IMR-90 (cell line): ENCODE measurements at regions of chr2 and their contacts with region 1.

Region 1: DNA sequence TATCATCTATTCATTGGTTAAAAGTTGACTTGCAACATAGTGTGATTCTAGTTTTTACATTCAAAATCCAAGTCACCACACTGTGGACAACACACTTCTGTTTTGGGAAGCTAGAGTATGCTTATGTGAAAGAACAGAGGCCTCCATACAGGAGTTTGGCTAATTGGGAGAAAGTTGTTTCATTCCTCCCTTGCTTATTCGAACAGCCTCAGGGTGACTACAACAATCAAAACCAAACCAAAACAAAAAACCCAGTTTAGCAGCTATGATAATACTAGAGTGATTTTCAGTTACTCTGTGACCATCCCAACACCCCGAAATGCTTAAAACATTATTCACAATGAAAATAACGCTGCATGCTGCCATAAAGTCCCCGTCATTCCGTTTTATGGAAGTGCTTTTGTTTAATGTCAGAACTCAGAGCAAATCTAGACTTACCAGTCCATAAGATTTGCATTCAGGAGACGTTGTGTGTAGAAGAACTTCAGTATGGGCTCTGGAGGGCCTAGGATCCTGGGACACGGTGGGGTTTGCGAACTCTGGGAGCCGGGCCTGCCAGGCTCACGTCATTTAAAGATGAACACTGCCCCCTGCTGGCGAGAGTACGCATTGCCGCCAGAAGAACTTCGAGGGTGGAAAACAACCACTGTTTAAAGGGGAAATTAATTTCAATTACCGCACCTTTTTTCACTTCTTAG is 111.4 kb downstream of the FTCDNL1 start:
- DNase-seq: peak; percentile 52
- ATAC-seq: peak; percentile 75
- H3K4me3 ChIP-seq: no peak overlapping the region
- H3K27ac ChIP-seq: no peak overlapping the region
- H3K4me1 ChIP-seq: peaks cover 2% of the 10 kb centered on the region; the same call in 1 of the 2 replicates
- H3K27me3 ChIP-seq: no peaks in the 10 kb centered on the region; the same call in 1 of the 2 replicates
- CTCF ChIP-seq: peak; percentile 82
- POLR2A ChIP-seq: no peak
- RAD21 ChIP-seq: peak; percentile 64

Region 2: DNA sequence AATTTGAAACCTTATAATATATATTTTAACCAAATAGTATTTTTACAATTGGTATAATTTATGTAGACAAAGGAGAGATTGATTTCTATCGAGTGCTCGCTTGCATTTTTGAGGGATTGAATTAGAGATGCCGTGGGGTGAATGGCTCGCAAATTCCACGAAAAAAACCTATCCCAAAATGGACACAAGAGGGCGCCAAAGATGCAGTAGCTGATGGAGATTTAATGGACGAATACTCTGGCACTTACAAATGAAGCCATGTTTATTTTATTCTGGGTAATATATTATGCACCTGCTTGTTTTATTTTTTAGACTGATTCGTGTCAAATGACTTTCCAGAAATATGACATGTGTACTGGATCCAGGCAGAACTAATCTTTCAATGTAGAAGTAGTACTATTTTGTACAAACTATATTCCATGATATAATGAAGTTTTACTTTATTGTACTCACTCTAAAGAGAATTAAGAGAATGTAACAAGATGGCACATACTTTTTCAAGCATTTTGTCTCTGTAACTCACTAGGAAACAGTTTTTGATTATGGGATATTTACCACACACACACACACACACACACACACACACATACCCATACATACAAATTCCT is 1429.8 kb before region 1 on chr2:
- CTCF ChIA-PET with region 1: interaction called, 3 read pairs
- POLR2A ChIA-PET with region 1: no interaction called
- dilution Hi-C with region 1: no loop called
- in situ Hi-C with region 1: loop called (anchors 25 kb)
- intact Hi-C with region 1: loop called (anchors 2 kb)
- DNase-seq: peak; percentile 38
- ATAC-seq: peak; percentile 56
- H3K4me3 ChIP-seq: no peak overlapping the region
- H3K27ac ChIP-seq: no peak overlapping the region
- H3K4me1 ChIP-seq: no peaks in the 10 kb centered on the region
- H3K27me3 ChIP-seq: no peaks in the 10 kb centered on the region; the same call in 1 of the 2 replicates
- CTCF ChIP-seq: peak; percentile 81
- POLR2A ChIP-seq: no peak
- RAD21 ChIP-seq: peak; percentile 54

Region 3: DNA sequence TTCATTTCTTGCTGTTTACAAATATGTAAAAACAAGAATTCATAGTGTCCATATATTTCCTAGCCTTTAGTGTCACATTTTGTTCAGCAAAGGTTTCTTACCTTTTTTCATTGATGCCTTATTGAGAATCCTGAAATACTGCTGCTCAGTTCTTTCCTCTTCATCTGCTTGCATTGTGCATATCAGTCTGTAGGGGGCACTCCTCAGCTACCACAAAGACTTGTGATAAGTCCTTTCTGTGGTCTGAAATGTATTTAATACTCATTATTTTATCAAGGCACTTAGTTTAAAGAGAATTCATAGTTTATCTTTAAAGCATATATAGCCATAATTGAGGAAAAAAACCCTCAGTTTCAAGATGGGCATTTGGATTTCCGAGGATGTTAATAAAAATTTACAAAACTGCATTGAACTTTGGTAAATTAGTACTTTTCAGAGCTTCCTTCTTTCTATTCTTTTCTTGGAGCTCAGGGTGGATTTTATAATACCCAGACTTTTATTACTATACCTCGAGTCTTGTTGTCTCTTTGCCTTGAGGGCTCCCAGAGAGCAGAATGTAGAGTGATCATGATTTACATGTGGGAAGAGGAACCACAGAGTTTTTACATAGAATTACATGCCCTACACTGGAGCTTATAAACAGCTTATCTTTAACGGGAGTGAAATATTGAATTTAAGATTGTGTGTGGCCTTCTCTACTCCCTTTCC is 1365.0 kb before region 1 on chr2:
- CTCF ChIA-PET with region 1: no interaction called
- POLR2A ChIA-PET with region 1: no interaction called
- dilution Hi-C with region 1: no loop called
- in situ Hi-C with region 1: no loop called
- intact Hi-C with region 1: loop called (anchors 2 kb)
- DNase-seq: peak; percentile 70
- ATAC-seq: peak; percentile 79
- H3K4me3 ChIP-seq: no peak overlapping the region
- H3K27ac ChIP-seq: no peak overlapping the region
- H3K4me1 ChIP-seq: no peaks in the 10 kb centered on the region
- H3K27me3 ChIP-seq: no peaks in the 10 kb centered on the region
- CTCF ChIP-seq: peak; percentile 74
- POLR2A ChIP-seq: no peak
- RAD21 ChIP-seq: peak; percentile 75

Region 4: DNA sequence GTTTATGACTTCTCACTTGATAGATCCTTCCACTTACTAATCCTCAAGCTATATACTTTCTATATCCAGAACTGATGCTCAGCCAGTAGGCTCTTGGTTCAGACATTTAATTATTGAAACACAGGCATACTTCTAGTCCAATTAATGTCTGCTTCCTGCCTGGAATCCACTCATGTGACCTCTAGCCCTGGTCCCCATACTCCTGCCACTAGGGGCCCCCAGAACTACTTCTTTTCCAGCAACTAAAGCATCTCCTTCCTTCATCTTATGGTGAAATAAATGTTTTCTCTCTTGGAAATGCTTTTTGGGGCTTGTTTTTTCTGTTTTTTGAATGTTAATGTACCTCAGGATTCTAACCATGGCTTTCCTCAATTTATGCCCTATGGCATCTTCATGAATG is 809.4 kb before region 1 on chr2:
- CTCF ChIA-PET with region 1: no interaction called
- POLR2A ChIA-PET with region 1: no interaction called
- dilution Hi-C with region 1: no loop called
- in situ Hi-C with region 1: no loop called
- intact Hi-C with region 1: no loop called
- DNase-seq: no peak
- ATAC-seq: no peak
- H3K4me3 ChIP-seq: no peak overlapping the region
- H3K27ac ChIP-seq: no peak overlapping the region
- H3K4me1 ChIP-seq: no peaks in the 10 kb centered on the region
- H3K27me3 ChIP-seq: no peaks in the 10 kb centered on the region
- CTCF ChIP-seq: 0 out of 2 replicates have a peak, but pooled peaks have one; percentile 4
- POLR2A ChIP-seq: no peak
- RAD21 ChIP-seq: no peak

Region 5: GRCh38 chr2:199509403-199509802 is 230.2 kb before region 1 on chr2:
- CTCF ChIA-PET with region 1: interaction called, 3 read pairs
- POLR2A ChIA-PET with region 1: no interaction called
- dilution Hi-C with region 1: no loop called
- in situ Hi-C with region 1: no loop called
- intact Hi-C with region 1: loop called (anchors 10 kb)
- DNase-seq: no peak
- ATAC-seq: no peak
- H3K4me3 ChIP-seq: no peak overlapping the region
- H3K27ac ChIP-seq: no peak overlapping the region
- H3K4me1 ChIP-seq: no peaks in the 10 kb centered on the region
- H3K27me3 ChIP-seq: no peaks in the 10 kb centered on the region
- CTCF ChIP-seq: no peak
- POLR2A ChIP-seq: no peak
- RAD21 ChIP-seq: no peak

Region 6: GRCh38 chr2:199704358-199705238 is 35.0 kb before region 1 on chr2:
- CTCF ChIA-PET with region 1: interaction called, 4 read pairs
- POLR2A ChIA-PET with region 1: no interaction called
- dilution Hi-C with region 1: no loop called
- in situ Hi-C with region 1: no loop called
- intact Hi-C with region 1: loop called (anchors 1 kb)
- DNase-seq: peak; percentile 24
- ATAC-seq: peak; percentile 98
- H3K4me3 ChIP-seq: no peak overlapping the region
- H3K27ac ChIP-seq: no peak overlapping the region
- H3K4me1 ChIP-seq: no peaks in the 10 kb centered on the region
- H3K27me3 ChIP-seq: no peaks in the 10 kb centered on the region
- CTCF ChIP-seq: peak; percentile 53
- POLR2A ChIP-seq: no peak
- RAD21 ChIP-seq: peak; percentile 56